Activated B cell treated with CpG ODN at 0.5 μM for 24 hours (primary cell): ENCODE measurements at regions of chr13 and their contacts with region 1.

Region 1: GRCh38 chr13:110915057-110915873 is at the start of gene ANKRD10:
- DNase-seq: peak; percentile 98
- ATAC-seq: peak; percentile 80
- H3K4me3 Mint-ChIP-seq: peak within 1 kb of the TSS; percentile 89
- H3K27ac Mint-ChIP-seq: peak within 1 kb of the TSS; percentile 91
- H3K4me1 Mint-ChIP-seq: peaks cover 58% of the 10 kb centered on the region
- H3K27me3 Mint-ChIP-seq: no peaks in the 10 kb centered on the region
- CTCF ChIP-seq: no peak
- total RNA-seq, gene ANKRD10: 212 and 256 TPM in 2 replicates

Region 2: DNA sequence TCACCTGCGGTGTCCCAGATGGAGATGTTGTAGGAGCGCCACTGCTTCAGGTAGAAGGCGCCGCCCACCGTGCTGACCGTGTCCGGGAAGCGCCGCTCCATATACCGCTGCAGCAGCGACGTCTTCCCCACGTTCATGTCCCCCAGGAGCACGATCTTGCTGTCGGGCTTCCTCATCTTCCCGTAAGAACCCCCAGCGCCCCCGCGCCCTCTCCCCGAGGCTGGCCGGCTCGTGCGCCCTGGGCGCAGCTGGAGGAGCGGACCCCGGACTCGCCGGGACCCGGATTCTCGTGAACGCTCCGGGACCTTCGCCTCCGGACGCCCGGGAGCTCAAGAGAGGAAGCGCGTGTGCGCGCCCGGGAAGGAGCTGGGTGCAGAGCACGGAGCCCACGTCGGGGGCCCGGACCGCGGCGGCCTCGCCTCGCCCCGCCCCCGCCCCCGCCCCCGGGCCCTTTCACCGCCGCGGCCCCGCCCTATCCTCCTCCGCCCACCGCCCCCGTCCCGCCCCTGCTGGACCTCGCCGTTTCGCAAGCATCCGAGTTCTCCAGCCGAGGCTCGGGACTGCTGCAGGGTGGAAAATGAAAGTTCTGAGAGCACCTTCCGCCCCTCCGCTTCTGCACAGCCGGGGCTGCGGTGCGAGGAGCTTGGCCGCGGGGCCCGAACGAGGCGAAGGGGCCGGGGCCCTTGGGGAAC is 353.8 kb before region 1 on chr13 and contains the start of gene RAB20:
- CTCF ChIA-PET with region 1: no interaction called
- POLR2A ChIA-PET with region 1: interaction called, 4 read pairs
- intact Hi-C with region 1: loop called (anchors 1 kb)
- DNase-seq: peak; percentile 57
- ATAC-seq: peak; percentile 74
- H3K4me3 Mint-ChIP-seq: peak within 1 kb of the TSS; percentile 96
- H3K27ac Mint-ChIP-seq: peak within 1 kb of the TSS; percentile 84
- H3K4me1 Mint-ChIP-seq: peaks cover 28% of the 10 kb centered on the region
- H3K27me3 Mint-ChIP-seq: peaks cover 5% of the 10 kb centered on the region
- CTCF ChIP-seq: no peak
- total RNA-seq, gene RAB20: 2.7 and 3.1 TPM in 2 replicates

Region 3: GRCh38 chr13:110715395-110716235 is 199.7 kb before region 1 on chr13:
- CTCF ChIA-PET with region 1: no interaction called
- POLR2A ChIA-PET with region 1: interaction called, 37 read pairs
- intact Hi-C with region 1: loop called (anchors 1 kb)
- DNase-seq: peak; percentile 88
- ATAC-seq: peak; percentile 62
- H3K4me3 Mint-ChIP-seq: peak overlapping the region; percentile 96
- H3K27ac Mint-ChIP-seq: peak overlapping the region; percentile 97
- H3K4me1 Mint-ChIP-seq: peaks cover 39% of the 10 kb centered on the region
- H3K27me3 Mint-ChIP-seq: no peaks in the 10 kb centered on the region
- CTCF ChIP-seq: no peak

Region 4: GRCh38 chr13:110869231-110869804 is 45.9 kb before region 1 on chr13:
- CTCF ChIA-PET with region 1: no interaction called
- POLR2A ChIA-PET with region 1: no interaction called
- intact Hi-C with region 1: no loop called
- DNase-seq: no peak
- ATAC-seq: no peak
- H3K4me3 Mint-ChIP-seq: no peak overlapping the region
- H3K27ac Mint-ChIP-seq: no peak overlapping the region
- H3K4me1 Mint-ChIP-seq: no peaks in the 10 kb centered on the region
- H3K27me3 Mint-ChIP-seq: peaks cover 36% of the 10 kb centered on the region
- CTCF ChIP-seq: no peak

Region 5: DNA sequence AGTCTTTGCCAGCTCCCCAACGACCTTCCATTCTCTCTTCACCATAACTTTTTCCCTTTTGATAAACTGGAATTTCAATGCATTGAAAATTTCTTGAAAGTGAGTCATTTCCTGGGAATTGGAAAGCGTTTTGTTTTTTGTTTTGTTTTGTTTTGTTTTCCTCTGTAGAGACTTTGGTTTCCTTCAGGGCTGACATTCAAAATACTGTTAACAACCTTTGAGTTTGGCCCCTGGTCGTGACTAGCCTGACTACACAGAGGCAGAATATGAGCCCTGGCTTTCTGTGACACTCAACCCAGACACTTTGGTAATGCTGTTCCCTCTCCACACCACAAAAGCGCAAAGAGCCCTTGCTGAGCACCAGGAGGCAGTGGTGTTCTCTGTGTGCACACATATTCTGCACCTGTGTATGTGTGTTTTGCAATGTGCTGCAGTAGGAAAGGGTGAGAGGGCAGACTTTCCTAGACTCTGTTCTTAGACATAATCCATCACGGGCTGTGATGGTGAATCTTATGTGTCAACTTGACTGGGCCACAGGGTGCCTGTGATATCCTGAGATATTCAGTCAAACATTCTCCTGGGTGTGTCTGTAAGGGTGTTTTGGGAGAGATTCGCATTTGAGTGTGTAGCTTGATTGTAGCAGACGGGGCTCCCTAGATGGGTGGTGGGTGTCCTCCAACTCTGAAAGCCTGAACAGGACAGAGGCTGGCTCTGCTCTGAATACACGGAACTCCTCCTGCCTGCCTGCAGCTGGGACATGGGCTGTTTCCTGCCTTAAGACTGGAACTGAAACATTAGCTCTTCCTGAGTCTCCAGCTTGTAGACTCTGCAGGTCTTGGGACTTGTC is 29.1 kb after region 1 on chr13:
- CTCF ChIA-PET with region 1: interaction called, 5 read pairs
- POLR2A ChIA-PET with region 1: interaction called, 4 read pairs
- intact Hi-C with region 1: loop called (anchors 1 kb)
- DNase-seq: no peak
- ATAC-seq: peak; percentile 43
- H3K4me3 Mint-ChIP-seq: no peak overlapping the region
- H3K27ac Mint-ChIP-seq: no peak overlapping the region
- H3K4me1 Mint-ChIP-seq: peaks cover 25% of the 10 kb centered on the region
- H3K27me3 Mint-ChIP-seq: peaks cover 1% of the 10 kb centered on the region
- CTCF ChIP-seq: no peak

Region 6: GRCh38 chr13:111066544-111066943 is 151.3 kb after region 1 on chr13:
- CTCF ChIA-PET with region 1: interaction called, 14 read pairs
- POLR2A ChIA-PET with region 1: interaction called, 12 read pairs
- intact Hi-C with region 1: loop called (anchors 1 kb)
- DNase-seq: no peak
- ATAC-seq: no peak
- H3K4me3 Mint-ChIP-seq: peak overlapping the region; percentile 67
- H3K27ac Mint-ChIP-seq: no peak overlapping the region
- H3K4me1 Mint-ChIP-seq: peaks cover 10% of the 10 kb centered on the region
- H3K27me3 Mint-ChIP-seq: peaks cover 33% of the 10 kb centered on the region
- CTCF ChIP-seq: no peak

Region 7: DNA sequence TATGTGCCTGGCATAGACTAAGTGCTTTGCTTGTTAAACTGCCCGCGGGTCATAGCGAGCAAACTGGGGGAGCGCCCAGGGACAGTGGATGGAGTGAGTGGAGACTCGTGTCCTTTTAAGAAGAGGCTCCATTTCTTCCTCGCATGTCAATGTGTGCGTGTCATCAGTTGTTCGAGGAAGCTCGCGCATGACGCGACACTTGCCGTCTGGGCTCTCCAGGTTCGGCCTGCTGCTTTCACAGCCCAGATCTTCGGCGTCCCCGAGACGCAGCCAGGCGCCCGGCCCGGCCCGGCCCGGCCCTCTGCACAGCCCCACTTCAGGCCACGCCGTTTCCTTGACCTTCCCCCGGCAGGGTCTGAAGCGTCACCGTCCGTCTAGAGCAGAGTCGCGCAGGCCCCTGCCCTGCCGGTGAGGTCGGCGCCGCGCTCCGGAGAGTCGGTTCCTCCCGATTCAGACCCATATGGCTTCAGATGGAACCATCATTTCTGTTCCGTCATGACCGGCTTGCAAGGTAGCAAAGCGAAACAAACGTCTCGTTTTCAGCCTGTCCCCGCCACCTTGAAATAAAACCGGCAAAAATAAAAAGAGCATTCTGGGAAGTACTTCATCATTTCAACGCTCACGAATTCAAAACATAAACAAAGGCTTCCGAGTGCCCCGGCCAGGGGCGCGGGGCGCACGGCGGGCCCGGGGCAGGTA is 199.2 kb after region 1 on chr13:
- CTCF ChIA-PET with region 1: no interaction called
- POLR2A ChIA-PET with region 1: no interaction called
- intact Hi-C with region 1: no loop called
- DNase-seq: no peak
- ATAC-seq: peak; percentile 34
- H3K4me3 Mint-ChIP-seq: peak overlapping the region; percentile 86
- H3K27ac Mint-ChIP-seq: no peak overlapping the region
- H3K4me1 Mint-ChIP-seq: peaks cover 16% of the 10 kb centered on the region
- H3K27me3 Mint-ChIP-seq: peaks cover 68% of the 10 kb centered on the region
- CTCF ChIP-seq: no peak

Region 8: GRCh38 chr13:111202745-111203144 is 287.5 kb after region 1 on chr13:
- CTCF ChIA-PET with region 1: no interaction called
- POLR2A ChIA-PET with region 1: interaction called, 8 read pairs
- intact Hi-C with region 1: loop called (anchors 5 kb)
- DNase-seq: no peak
- ATAC-seq: peak; percentile 49
- H3K4me3 Mint-ChIP-seq: peak overlapping the region; percentile 28
- H3K27ac Mint-ChIP-seq: peak overlapping the region; percentile 74
- H3K4me1 Mint-ChIP-seq: peaks cover 87% of the 10 kb centered on the region
- H3K27me3 Mint-ChIP-seq: no peaks in the 10 kb centered on the region
- CTCF ChIP-seq: no peak